ENCODE measurements at regions of chr4 and their contacts with region 1.

Region 1: DNA sequence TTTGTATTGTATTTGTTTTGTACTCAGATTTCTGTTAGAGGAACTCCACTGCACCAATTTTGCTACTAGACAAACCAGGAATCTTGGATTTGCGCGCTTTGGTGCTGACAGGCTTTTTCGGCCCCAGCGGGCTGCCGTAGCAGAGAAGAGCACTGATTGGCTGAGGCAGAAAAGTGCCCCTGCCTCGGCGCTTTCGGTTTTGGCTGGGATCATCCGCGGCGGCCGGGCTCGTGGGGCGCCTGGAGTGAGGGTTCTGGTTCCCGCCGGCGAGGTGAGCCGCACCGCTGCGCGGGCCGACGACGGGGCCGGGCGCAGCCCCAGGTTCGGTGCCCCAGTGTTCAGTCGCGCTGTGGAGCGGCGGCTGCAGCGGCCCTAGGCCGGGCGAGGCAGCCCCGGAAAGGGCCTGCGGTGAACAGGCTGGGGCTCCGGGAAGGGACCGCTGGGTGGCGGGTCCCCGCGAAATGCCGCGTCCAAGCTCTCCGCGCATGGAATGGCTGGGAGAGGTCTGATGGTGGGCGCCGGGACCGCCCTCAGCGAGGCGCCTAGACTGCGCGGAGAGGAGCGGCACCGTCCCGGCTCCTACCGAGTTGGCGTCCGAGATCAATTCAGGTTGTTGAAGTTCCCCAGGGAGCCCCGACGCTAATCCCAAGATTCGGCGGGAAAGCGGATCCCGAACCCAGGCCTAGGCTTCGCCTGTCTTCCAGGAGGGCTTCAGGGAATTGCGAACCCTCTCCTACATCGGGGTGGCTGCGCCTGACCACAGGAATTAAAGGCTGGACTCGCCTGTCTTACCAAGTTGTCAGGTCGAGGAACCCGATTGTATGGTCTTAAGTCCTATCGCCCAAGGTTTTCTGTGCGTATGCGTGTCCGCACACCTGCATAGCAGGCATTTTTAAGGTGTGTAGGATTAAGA is at the start of gene LSM6:
- DNase-seq: peak; percentile 85
- ATAC-seq: peak; percentile 96
- H3K4me3 ChIP-seq: peak within 1 kb of the TSS; percentile 60
- H3K27ac ChIP-seq: peak within 1 kb of the TSS; percentile 53
- H3K4me1 ChIP-seq: peaks cover 3% of the 10 kb centered on the region; the same call in 1 of the 2 replicates
- H3K27me3 ChIP-seq: no peaks in the 10 kb centered on the region
- CTCF ChIP-seq: 0 out of 2 replicates have a peak, but pooled peaks have one; percentile 5
- POLR2A ChIP-seq: no peak
- RAD21 ChIP-seq: no peak
- total RNA-seq, gene LSM6: 13.4 and 33.1 TPM in 2 replicates

Region 2: DNA sequence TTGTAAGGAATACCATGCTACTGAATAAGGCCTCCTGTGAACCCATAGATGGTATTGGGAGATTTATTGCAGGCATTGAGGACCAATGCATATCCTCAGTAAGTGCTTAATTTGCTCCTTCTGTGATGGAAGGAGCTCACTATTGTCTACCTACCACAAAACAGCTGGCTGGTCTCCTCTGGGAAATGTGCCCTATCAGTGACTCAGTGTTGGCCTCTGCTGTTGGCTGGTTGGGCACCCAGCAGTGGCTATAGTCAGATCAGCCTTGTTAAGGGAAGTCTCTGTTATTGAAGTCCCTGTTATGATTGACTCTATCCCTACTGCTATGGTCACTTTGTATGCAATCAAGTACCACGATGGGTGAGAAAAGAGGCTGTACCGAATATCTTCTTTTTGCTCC is 967.9 kb before region 1 on chr4:
- CTCF ChIA-PET with region 1: no interaction called
- POLR2A ChIA-PET with region 1: no interaction called
- dilution Hi-C with region 1: no loop called
- in situ Hi-C with region 1: no loop called
- intact Hi-C with region 1: loop called (anchors 10 kb)
- DNase-seq: no peak
- ATAC-seq: peak; percentile 27; the same call in 1 of the 2 replicates
- H3K4me3 ChIP-seq: no peak overlapping the region
- H3K27ac ChIP-seq: no peak overlapping the region
- H3K4me1 ChIP-seq: no peaks in the 10 kb centered on the region
- H3K27me3 ChIP-seq: no peaks in the 10 kb centered on the region; the same call in 1 of the 2 replicates
- CTCF ChIP-seq: no peak
- POLR2A ChIP-seq: no peak
- RAD21 ChIP-seq: no peak

Region 3: GRCh38 chr4:147071209-147071740 is 895.5 kb after region 1 on chr4:
- CTCF ChIA-PET with region 1: no interaction called
- POLR2A ChIA-PET with region 1: no interaction called
- dilution Hi-C with region 1: no loop called
- in situ Hi-C with region 1: no loop called
- intact Hi-C with region 1: no loop called
- DNase-seq: no peak
- ATAC-seq: no peak
- H3K4me3 ChIP-seq: no peak overlapping the region
- H3K27ac ChIP-seq: no peak overlapping the region
- H3K4me1 ChIP-seq: peaks cover 2% of the 10 kb centered on the region; the same call in 1 of the 2 replicates
- H3K27me3 ChIP-seq: peaks cover 8% of the 10 kb centered on the region
- CTCF ChIP-seq: no peak
- POLR2A ChIP-seq: no peak
- RAD21 ChIP-seq: no peak